Activated CD8-positive, alpha-beta memory T cell treated with anti-CD3 and anti-CD28 coated beads, Interleukin-2, amount 10 ng/mL, durations not matched to agents 7 days and 5 days (primary cell): ENCODE measurements at regions of chr1 and their contacts with region 1.

Region 1: GRCh38 chr1:155970531-155971167 is 7.7 kb downstream of the ARHGEF2 start:
- DNase-seq: peak; percentile 58
- ATAC-seq: peak; percentile 48
- H3K4me3 Mint-ChIP-seq: peak overlapping the region; percentile 3
- H3K27ac Mint-ChIP-seq: peak overlapping the region; percentile 86
- H3K4me1 Mint-ChIP-seq: peaks cover 84% of the 10 kb centered on the region
- H3K27me3 Mint-ChIP-seq: no peaks in the 10 kb centered on the region

Region 2: DNA sequence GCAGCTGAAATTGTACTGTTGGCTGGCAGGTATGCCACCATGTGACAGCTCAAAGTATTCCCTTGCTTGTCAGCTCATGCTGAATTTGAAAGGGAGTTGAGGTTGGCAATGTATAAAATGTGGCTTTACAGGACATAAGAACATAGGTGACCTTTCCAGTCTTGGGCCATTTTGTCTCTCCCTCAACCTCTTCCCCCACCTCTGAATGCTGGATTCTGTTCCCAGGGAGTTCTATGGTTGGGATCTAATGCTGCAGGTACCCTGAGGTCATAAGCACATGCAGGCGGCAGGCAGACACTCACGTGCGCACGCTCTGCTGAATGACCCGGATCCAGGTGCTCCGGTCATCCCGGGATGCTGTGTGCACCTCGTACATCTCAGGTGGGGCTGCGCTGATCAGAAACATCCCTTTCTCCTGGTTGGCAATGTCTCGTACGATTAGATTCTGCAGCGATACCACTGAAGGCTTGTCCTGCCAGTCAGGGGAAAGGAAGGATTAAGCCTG is 13.2 kb before region 1 on chr1:
- CTCF ChIA-PET with region 1: interaction called, 15 read pairs
- DNase-seq: no peak
- ATAC-seq: no peak
- H3K4me3 Mint-ChIP-seq: no peak overlapping the region
- H3K27ac Mint-ChIP-seq: peak overlapping the region; percentile 35
- H3K4me1 Mint-ChIP-seq: peaks cover 11% of the 10 kb centered on the region
- H3K27me3 Mint-ChIP-seq: no peaks in the 10 kb centered on the region